A549 (cell line): ENCODE measurements at regions of chr5 and their contacts with region 1.

Region 1: DNA sequence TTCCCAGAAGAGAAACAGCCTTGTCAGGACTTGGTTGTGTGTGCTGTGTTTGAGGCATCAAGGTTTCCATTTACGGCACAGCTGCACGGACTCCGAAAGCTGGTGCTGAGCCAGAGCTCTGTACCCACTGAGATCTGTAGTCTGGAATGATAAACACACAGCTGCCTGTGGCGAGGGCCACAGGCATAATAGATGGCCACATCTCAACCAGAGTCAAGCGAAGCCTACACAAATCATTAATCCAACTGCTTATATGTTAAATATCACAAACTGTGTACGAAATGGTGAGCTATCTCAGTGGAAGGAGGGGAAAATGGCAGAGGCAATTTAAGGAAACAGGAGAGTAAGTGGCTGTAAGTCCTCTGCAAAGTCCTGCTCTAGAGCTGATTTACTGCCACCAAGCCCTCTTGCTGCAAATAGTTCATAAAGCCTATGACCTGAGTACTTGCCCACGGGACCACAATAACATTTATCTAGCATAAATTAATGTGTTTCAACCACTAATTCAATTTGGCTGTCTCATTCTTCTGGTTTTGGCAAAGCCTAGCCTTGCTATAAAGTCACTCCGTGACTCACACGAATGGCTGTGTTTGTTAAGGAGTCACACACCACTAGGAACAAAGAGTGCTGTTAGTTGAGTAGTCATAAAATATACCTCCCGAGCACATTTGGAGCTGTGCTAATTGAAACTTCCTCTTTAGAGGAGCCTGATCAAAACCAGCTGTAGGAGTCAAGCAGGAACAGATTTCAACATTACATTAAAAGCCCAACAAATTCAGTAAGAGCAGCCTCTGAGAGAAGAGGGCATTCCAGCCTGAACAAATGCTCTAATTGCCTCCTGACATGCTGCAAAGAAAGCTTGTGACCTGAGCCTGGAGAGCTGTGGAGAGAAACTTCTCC is 738.6 kb upstream of the ZNF608 start:
- DNase-seq: peak; percentile 43 to 71
- ATAC-seq: peak; percentile 92 to 94
- H3K4me3 ChIP-seq: peak overlapping the region; percentile 33; the same call in 2 of the 3 replicates
- H3K27ac ChIP-seq: peak overlapping the region; percentile 84 to 87
- H3K4me1 ChIP-seq: peaks cover 37% of the 10 kb centered on the region
- CTCF ChIP-seq: no peak
- EP300 ChIP-seq: peak; percentile 54 to 66; a peak in 2 of 5 replicates
- POLR2A ChIP-seq: no peak
- RAD21 ChIP-seq: 0 out of 5 replicates have a peak, but pooled peaks of 1 of the 2 experiments have one; percentile 5

Region 2: DNA sequence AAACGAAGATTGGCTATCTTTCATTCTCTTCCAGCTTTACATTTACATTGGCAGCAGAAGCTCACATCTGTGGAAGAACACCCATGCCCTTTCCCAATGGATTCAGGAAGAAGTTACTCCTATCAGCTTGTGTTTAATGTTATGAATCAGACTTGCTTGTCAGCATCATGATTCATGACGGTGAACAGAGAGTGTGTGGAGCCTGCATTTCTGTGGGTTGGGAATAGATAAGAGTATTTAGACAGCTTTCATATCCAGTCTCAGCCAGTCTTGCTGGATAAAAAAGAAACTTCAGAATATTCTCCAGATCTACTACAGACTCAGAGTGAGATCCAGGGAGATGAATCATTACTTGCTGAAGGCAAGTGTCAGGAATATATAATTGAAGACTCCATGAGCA is 74.3 kb after region 1 on chr5:
- CTCF ChIA-PET with region 1: no interaction called
- POLR2A ChIA-PET with region 1: interaction called, 10 read pairs
- DNase-seq: peak; percentile 19 to 69
- ATAC-seq: peak; percentile 90 to 97
- H3K4me3 ChIP-seq: no peak overlapping the region
- H3K27ac ChIP-seq: 0 out of 6 replicates have a peak overlapping the region, but pooled peaks of 1 of the 2 experiments have one; percentile 5
- H3K4me1 ChIP-seq: peaks cover 12% of the 10 kb centered on the region; the same call in 1 of the 3 replicates
- CTCF ChIP-seq: no peak
- EP300 ChIP-seq: no peak
- POLR2A ChIP-seq: no peak
- RAD21 ChIP-seq: no peak